Naive thymus-derived CD4-positive, alpha-beta T cell (primary cell): ENCODE measurements at regions of chr6 and their contacts with region 1.

Region 1: GRCh38 chr6:106114492-106115265 is 28.5 kb downstream of the PRDM1 start:
- DNase-seq: peak in 1 of 9 donors; percentile 64
- ATAC-seq: no peak
- H3K4me3 ChIP-seq: peak overlapping the region; percentile 28
- H3K4me3 Mint-ChIP-seq: peak overlapping the region in 3 of 10 donors; percentile 11 to 52 (median 15)
- H3K27ac ChIP-seq: no peak overlapping the region
- H3K27ac Mint-ChIP-seq: peak overlapping the region in 2 of 9 donors; percentile 47 to 59
- H3K4me1 ChIP-seq: peaks cover 39 to 78% of the 10 kb centered on the region in 2 donors
- H3K4me1 Mint-ChIP-seq: peaks cover 39 to 84% (median 61%) of the 10 kb centered on the region in 7 donors
- H3K27me3 ChIP-seq: no peaks in the 10 kb centered on the region
- H3K27me3 Mint-ChIP-seq: peaks cover 0 to 5% (median 0%) of the 10 kb centered on the region in 5 donors

Region 2: GRCh38 chr6:105522626-105523322 is 591.9 kb before region 1 on chr6:
- CTCF ChIA-PET with region 1: no interaction called
- POLR2A ChIA-PET with region 1: no interaction called
- intact Hi-C with region 1: no loop called
- DNase-seq: no peak
- ATAC-seq: no peak
- H3K4me3 ChIP-seq: no peak overlapping the region
- H3K4me3 Mint-ChIP-seq: no peak overlapping the region
- H3K27ac ChIP-seq: no peak overlapping the region
- H3K27ac Mint-ChIP-seq: no peak overlapping the region
- H3K4me1 ChIP-seq: no peaks in the 10 kb centered on the region
- H3K4me1 Mint-ChIP-seq: peaks cover 0 to 4% (median 0%) of the 10 kb centered on the region in 7 donors
- H3K27me3 ChIP-seq: no peaks in the 10 kb centered on the region
- H3K27me3 Mint-ChIP-seq: peaks cover 0 to 16% (median 7%) of the 10 kb centered on the region in 5 donors

Region 3: DNA sequence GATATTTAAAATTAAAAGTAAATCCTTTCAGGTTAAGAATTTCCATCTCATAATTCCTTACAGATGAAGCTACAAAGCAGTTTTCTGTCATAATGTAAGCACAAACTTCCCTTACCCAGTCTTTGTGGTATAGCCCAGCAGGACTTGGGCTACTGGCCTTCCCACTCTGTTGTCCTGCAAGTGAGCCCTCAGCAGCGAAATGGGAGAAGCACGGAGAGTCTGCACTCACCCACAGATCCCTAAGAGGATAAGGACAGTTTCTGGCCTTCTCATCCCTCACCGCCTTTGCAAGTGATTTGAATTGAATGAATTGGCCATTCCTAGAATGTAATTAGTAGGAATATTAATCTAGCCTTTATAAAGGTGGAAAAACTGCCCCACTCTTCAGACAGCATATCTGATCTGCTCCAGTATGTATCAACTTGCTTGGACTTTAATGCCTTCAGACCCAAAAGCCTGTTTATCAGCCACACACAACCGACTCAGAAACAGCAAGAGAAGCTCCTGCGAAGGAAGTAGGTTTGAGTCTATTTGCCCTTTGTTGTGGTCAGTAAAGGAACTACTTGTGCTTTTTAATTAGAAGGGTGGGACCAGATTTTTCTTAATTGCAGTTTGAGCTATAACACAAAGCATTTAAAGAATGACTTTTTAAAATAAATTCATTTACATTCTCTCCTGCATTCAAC is 58.5 kb before region 1 on chr6:
- CTCF ChIA-PET with region 1: no interaction called
- POLR2A ChIA-PET with region 1: no interaction called
- intact Hi-C with region 1: loop called in 1 of 2 experiments (anchors 2 kb)
- DNase-seq: peak in 7 of 9 donors; percentile 22 to 69 (median 50)
- ATAC-seq: peak; percentile 68
- H3K4me3 ChIP-seq: peak overlapping the region; percentile 26
- H3K4me3 Mint-ChIP-seq: peak overlapping the region; percentile 1 to 80 (median 58)
- H3K27ac ChIP-seq: no peak overlapping the region
- H3K27ac Mint-ChIP-seq: peak overlapping the region in 4 of 9 donors; percentile 1 to 49 (median 2)
- H3K4me1 ChIP-seq: peaks cover 19 to 22% of the 10 kb centered on the region in 2 donors
- H3K4me1 Mint-ChIP-seq: peaks cover 6 to 32% (median 29%) of the 10 kb centered on the region in 7 donors
- H3K27me3 ChIP-seq: no peaks in the 10 kb centered on the region
- H3K27me3 Mint-ChIP-seq: peaks cover 0 to 11% (median 0%) of the 10 kb centered on the region in 5 donors

Region 4: DNA sequence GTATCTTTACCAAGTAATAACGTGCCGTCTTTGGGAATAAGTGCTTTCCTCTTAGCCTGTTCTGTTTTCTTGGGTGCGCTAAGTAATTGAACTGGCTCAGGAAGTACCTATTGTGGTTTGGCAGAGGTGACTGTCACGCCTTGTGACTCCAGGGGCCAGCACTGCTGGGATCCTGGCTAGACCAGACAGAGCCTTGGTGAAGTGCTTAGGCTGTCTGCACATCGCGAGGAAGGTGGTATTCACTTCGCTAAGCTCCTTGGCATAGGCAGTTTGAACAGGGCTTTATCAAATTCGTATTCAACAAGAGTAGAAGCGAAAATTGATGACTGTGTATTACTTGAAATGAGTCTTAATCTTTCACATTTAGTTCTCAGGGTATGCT is 11.0 kb before region 1 on chr6:
- CTCF ChIA-PET with region 1: interaction called, 3 read pairs
- POLR2A ChIA-PET with region 1: interaction called, 9 read pairs
- intact Hi-C with region 1: loop called (anchors 1 kb)
- DNase-seq: peak in 4 of 9 donors; percentile 22 to 32 (median 29)
- ATAC-seq: peak; percentile 65
- H3K4me3 ChIP-seq: peak overlapping the region; percentile 42
- H3K4me3 Mint-ChIP-seq: peak overlapping the region; percentile 69 to 95 (median 78)
- H3K27ac ChIP-seq: no peak overlapping the region
- H3K27ac Mint-ChIP-seq: peak overlapping the region in 8 of 9 donors; percentile 48 to 99 (median 74)
- H3K4me1 ChIP-seq: peaks cover 25 to 32% of the 10 kb centered on the region in 2 donors
- H3K4me1 Mint-ChIP-seq: peaks cover 22 to 81% (median 54%) of the 10 kb centered on the region in 7 donors
- H3K27me3 ChIP-seq: no peaks in the 10 kb centered on the region
- H3K27me3 Mint-ChIP-seq: no peaks in the 10 kb centered on the region

Region 5: GRCh38 chr6:106141441-106142237 is 27.0 kb after region 1 on chr6:
- CTCF ChIA-PET with region 1: no interaction called
- POLR2A ChIA-PET with region 1: no interaction called
- intact Hi-C with region 1: loop called (anchors 1 kb)
- DNase-seq: peak in 4 of 9 donors; percentile 28 to 46 (median 30)
- ATAC-seq: peak; percentile 77
- H3K4me3 ChIP-seq: peak overlapping the region; percentile 11
- H3K4me3 Mint-ChIP-seq: peak overlapping the region; percentile 47 to 83 (median 69)
- H3K27ac ChIP-seq: peak overlapping the region; percentile 36
- H3K27ac Mint-ChIP-seq: peak overlapping the region; percentile 6 to 91 (median 67)
- H3K4me1 ChIP-seq: peaks cover 23 to 35% of the 10 kb centered on the region in 2 donors
- H3K4me1 Mint-ChIP-seq: peaks cover 17 to 60% (median 33%) of the 10 kb centered on the region in 7 donors
- H3K27me3 ChIP-seq: no peaks in the 10 kb centered on the region
- H3K27me3 Mint-ChIP-seq: no peaks in the 10 kb centered on the region

Region 6: GRCh38 chr6:106194949-106195921 is 80.6 kb after region 1 on chr6:
- CTCF ChIA-PET with region 1: no interaction called
- POLR2A ChIA-PET with region 1: no interaction called
- intact Hi-C with region 1: loop called in 1 of 2 experiments (anchors 1 kb)
- DNase-seq: peak in 7 of 9 donors; percentile 43 to 70 (median 57)
- ATAC-seq: peak; percentile 81
- H3K4me3 ChIP-seq: peak overlapping the region; percentile 21
- H3K4me3 Mint-ChIP-seq: peak overlapping the region; percentile 19 to 80 (median 71)
- H3K27ac ChIP-seq: peak overlapping the region; percentile 30
- H3K27ac Mint-ChIP-seq: peak overlapping the region; percentile 64 to 91 (median 84)
- H3K4me1 ChIP-seq: peaks cover 30 to 36% of the 10 kb centered on the region in 2 donors
- H3K4me1 Mint-ChIP-seq: peaks cover 24 to 54% (median 41%) of the 10 kb centered on the region in 7 donors
- H3K27me3 ChIP-seq: no peaks in the 10 kb centered on the region
- H3K27me3 Mint-ChIP-seq: no peaks in the 10 kb centered on the region